CD8-positive, alpha-beta memory T cell (primary cell): ENCODE measurements at regions of chr3 and their contacts with region 1.

Region 1: DNA sequence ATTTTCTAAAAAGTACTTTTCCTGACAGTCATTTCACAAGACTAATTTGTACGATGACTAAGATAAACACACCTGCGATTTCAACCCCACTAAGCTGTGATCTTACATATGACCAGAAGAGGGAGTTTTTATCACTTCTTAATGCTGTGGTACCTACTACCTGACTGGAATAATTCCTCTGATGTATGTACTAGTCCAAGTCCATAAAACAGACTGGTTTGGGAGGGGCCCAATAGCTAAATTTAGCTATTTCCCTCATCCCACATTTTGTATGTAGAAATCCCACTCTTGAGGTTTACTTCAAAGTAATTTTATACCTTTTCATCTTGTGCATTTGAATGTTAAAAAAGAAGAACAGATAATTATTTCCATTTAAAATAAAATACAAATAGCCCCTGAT is 49.7 kb upstream of the SCAANT1 start:
- DNase-seq: peak in 2 of 5 donors; percentile 58 to 62
- H3K4me3 ChIP-seq: no peak overlapping the region
- H3K4me3 Mint-ChIP-seq: no peak overlapping the region
- H3K27ac ChIP-seq: no peak overlapping the region
- H3K27ac Mint-ChIP-seq: peak overlapping the region in 3 of 8 donors; percentile 55 to 70 (median 65)
- H3K4me1 ChIP-seq: peaks cover 16% of the 10 kb centered on the region
- H3K4me1 Mint-ChIP-seq: peaks cover 36 to 77% (median 77%) of the 10 kb centered on the region in 3 donors
- H3K27me3 ChIP-seq: no peaks in the 10 kb centered on the region
- H3K27me3 Mint-ChIP-seq: no peaks in the 10 kb centered on the region

Region 2: DNA sequence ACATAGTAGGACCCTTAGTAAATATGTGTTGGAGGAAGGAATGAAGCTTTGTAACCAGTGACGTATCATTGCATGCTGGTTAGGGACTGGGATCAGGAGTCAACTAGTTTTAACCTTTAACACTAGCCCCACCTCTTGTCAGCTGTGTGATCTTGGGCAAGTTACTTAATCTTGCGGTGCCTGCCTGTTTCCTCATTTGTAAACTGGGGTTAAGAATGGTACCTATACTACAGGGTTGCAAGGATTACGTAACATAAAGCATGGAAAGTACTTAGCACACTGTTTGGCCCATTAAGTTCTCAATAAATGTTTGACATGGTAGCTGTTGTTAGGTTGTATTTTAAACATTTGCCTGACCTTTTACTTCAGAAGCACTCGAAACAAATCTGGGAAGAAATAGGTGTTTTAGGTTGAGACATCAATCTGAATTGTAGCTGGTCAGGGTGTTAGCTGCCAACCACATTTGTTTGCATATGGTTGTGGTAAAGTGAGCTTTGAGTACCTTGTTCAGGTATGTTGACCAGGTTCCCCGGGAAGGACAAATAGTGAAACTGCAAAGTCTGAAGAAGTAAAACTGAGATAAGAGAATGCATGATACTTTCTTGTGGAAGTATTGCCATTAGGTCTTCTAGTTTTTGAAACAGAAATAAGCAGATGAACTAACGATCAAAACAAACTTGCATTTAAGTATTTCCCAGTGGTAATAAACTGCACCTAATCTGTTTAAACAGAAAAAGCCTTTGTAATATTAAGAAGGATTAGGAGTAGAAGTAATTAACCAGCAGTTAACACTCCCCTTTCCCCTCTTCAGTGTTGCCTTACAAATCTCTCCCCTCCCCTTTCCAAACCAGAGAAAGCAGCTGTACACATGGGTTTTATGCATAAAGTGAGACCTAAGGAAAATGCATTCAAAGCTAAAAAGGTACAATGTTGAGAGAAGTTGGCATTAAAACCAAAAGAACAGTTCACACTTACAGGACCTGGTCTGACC is 23.9 kb before region 1 on chr3:
- CTCF ChIA-PET with region 1: interaction called, 13 read pairs
- POLR2A ChIA-PET with region 1: interaction called, 3 read pairs
- DNase-seq: peak in 1 of 5 donors; percentile 13
- H3K4me3 ChIP-seq: no peak overlapping the region
- H3K4me3 Mint-ChIP-seq: peak overlapping the region in 2 of 7 donors; percentile 2 to 13
- H3K27ac ChIP-seq: no peak overlapping the region
- H3K27ac Mint-ChIP-seq: peak overlapping the region; percentile 5 to 94 (median 72)
- H3K4me1 ChIP-seq: peaks cover 24% of the 10 kb centered on the region
- H3K4me1 Mint-ChIP-seq: peaks cover 63 to 95% (median 87%) of the 10 kb centered on the region in 3 donors
- H3K27me3 ChIP-seq: no peaks in the 10 kb centered on the region
- H3K27me3 Mint-ChIP-seq: no peaks in the 10 kb centered on the region

Region 3: GRCh38 chr3:63951492-63952247 is 10.2 kb before region 1 on chr3:
- CTCF ChIA-PET with region 1: interaction called, 16 read pairs
- POLR2A ChIA-PET with region 1: interaction called, 3 read pairs
- DNase-seq: no peak
- H3K4me3 ChIP-seq: no peak overlapping the region
- H3K4me3 Mint-ChIP-seq: peak overlapping the region in 6 of 7 donors; percentile 27 to 76 (median 57)
- H3K27ac ChIP-seq: no peak overlapping the region
- H3K27ac Mint-ChIP-seq: peak overlapping the region; percentile 62 to 91 (median 78)
- H3K4me1 ChIP-seq: peaks cover 20% of the 10 kb centered on the region
- H3K4me1 Mint-ChIP-seq: peaks cover 49 to 67% (median 61%) of the 10 kb centered on the region in 3 donors
- H3K27me3 ChIP-seq: no peaks in the 10 kb centered on the region
- H3K27me3 Mint-ChIP-seq: no peaks in the 10 kb centered on the region

Region 4: DNA sequence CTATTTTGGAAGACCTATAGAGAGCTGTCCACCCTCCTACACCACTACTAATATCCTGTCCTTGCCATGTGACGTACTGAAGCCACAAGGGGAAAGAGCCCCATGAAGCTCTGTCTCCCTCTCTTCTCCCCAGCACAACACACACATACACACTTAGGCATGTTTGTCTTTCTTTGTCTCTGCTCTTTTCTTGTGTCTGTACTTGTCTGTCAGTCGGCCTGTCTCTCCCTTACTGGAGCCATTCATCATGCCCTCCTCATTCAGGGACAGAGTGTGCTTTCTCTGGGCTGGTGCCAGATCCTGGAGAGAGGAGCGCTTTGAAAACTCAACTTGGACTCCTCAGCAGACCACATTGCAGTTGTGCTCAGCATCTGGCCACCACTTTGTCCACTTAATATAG is 13.8 kb after region 1 on chr3:
- CTCF ChIA-PET with region 1: interaction called, 112 read pairs
- POLR2A ChIA-PET with region 1: no interaction called
- DNase-seq: no peak
- H3K4me3 ChIP-seq: no peak overlapping the region
- H3K4me3 Mint-ChIP-seq: peak overlapping the region; percentile 32 to 74 (median 49)
- H3K27ac ChIP-seq: no peak overlapping the region
- H3K27ac Mint-ChIP-seq: peak overlapping the region; percentile 68 to 95 (median 80)
- H3K4me1 ChIP-seq: peaks cover 92% of the 10 kb centered on the region
- H3K4me1 Mint-ChIP-seq: peaks cover 92 to 100% (median 100%) of the 10 kb centered on the region in 3 donors
- H3K27me3 ChIP-seq: no peaks in the 10 kb centered on the region
- H3K27me3 Mint-ChIP-seq: peaks cover 0 to 2% of the 10 kb centered on the region in 2 donors

Region 5: DNA sequence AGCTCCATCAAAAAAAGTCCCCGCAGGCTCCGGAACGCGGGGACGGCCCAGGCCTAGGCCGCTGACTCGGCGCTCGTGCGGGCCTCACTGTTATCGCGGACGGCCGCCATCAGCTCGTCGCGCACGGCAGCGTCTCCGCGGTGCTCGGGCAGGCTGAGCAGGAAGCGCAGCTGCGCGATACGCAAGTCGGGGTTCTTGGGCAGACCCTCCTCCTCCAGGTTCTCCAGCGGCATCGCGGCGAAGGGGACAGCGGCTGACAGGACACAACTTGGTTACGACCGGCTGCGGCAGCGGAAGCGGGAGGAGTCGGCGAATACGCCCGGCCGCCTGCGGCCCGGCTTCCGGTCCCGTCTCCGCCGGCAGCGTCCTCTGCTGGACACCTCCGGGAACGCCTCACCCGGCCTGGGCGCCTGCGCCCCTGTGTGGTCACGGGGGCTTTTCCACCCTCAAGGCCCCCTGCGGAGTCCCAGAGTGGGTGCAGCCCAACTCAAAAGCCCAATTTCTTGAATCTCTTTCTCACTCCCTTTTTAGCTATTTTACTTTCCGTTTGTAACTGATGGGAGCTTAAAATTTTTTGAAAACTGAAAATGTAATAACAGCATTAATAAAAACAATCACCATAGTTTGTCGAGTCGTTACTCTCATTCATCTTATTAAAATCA is 61.4 kb after region 1 on chr3 and contains the start of gene PSMD6:
- CTCF ChIA-PET with region 1: interaction called, 42 read pairs
- POLR2A ChIA-PET with region 1: interaction called, 4 read pairs
- DNase-seq: peak; percentile 88 to 96 (median 91)
- H3K4me3 ChIP-seq: peak within 1 kb of the TSS; percentile 91
- H3K4me3 Mint-ChIP-seq: peak within 1 kb of the TSS; percentile 85 to 95 (median 88)
- H3K27ac ChIP-seq: peak within 1 kb of the TSS; percentile 78
- H3K27ac Mint-ChIP-seq: peak within 1 kb of the TSS; percentile 61 to 97 (median 90)
- H3K4me1 ChIP-seq: peaks cover 27% of the 10 kb centered on the region
- H3K4me1 Mint-ChIP-seq: peaks cover 27 to 42% (median 36%) of the 10 kb centered on the region in 3 donors
- H3K27me3 ChIP-seq: no peaks in the 10 kb centered on the region
- H3K27me3 Mint-ChIP-seq: peaks cover 10 to 15% of the 10 kb centered on the region in 2 donors
- total RNA-seq, gene PSMD6: 134 to 136 TPM